Endothelial cell of umbilical vein (primary cell): ENCODE measurements at regions of chr18 and their contacts with region 1.

Region 1: DNA sequence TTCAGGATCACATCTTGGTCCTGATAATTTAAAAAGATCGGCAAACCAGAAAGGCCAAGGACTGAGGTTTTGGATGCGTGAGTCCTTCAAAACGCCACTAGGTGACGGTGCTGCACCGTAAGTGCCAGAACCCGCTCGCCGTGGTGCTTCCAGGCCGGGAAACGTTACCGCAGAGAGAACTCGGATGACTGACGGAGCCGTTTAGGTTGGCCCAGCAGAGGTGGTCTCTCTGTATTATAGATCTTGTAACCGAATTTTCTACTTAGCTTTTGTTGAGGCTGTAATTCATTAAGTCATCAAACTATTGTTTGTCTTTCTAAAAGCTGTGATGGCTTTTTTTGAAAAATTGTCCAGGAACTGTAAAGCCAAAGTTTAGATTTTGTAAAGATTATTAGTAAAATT is 39.8 kb upstream of the ADCYAP1 start:
- DNase-seq: peak; percentile 60
- H3K4me3 ChIP-seq: no peak overlapping the region
- H3K27ac ChIP-seq: no peak overlapping the region
- H3K4me1 ChIP-seq: no peaks in the 10 kb centered on the region
- H3K27me3 ChIP-seq: peaks cover 9 to 21% of the 10 kb centered on the region in 2 experiments
- CTCF ChIP-seq: peak; percentile 98 to 99
- POLR2A ChIP-seq: no peak

Region 2: GRCh38 chr18:892316-892715 is 27.4 kb after region 1 on chr18:
- CTCF ChIA-PET with region 1: no interaction called
- POLR2A ChIA-PET with region 1: no interaction called
- dilution Hi-C with region 1: no loop called
- intact Hi-C with region 1: no loop called
- DNase-seq: no peak
- H3K4me3 ChIP-seq: no peak overlapping the region
- H3K27ac ChIP-seq: no peak overlapping the region
- H3K4me1 ChIP-seq: no peaks in the 10 kb centered on the region
- H3K27me3 ChIP-seq: peaks cover 2 to 6% of the 10 kb centered on the region in 2 experiments
- CTCF ChIP-seq: no peak
- POLR2A ChIP-seq: no peak

Region 3: GRCh38 chr18:961644-962355 is 96.9 kb after region 1 on chr18:
- CTCF ChIA-PET with region 1: interaction called, 17 read pairs
- POLR2A ChIA-PET with region 1: no interaction called
- dilution Hi-C with region 1: no loop called
- intact Hi-C with region 1: loop called (anchors 1 kb)
- DNase-seq: peak; percentile 77
- H3K4me3 ChIP-seq: peak overlapping the region in 2 of 3 experiments; percentile 38 to 52
- H3K27ac ChIP-seq: no peak overlapping the region
- H3K4me1 ChIP-seq: no peaks in the 10 kb centered on the region
- H3K27me3 ChIP-seq: peaks cover 3 to 10% of the 10 kb centered on the region in 2 experiments
- CTCF ChIP-seq: peak; percentile 81 to 93
- POLR2A ChIP-seq: no peak

Region 4: DNA sequence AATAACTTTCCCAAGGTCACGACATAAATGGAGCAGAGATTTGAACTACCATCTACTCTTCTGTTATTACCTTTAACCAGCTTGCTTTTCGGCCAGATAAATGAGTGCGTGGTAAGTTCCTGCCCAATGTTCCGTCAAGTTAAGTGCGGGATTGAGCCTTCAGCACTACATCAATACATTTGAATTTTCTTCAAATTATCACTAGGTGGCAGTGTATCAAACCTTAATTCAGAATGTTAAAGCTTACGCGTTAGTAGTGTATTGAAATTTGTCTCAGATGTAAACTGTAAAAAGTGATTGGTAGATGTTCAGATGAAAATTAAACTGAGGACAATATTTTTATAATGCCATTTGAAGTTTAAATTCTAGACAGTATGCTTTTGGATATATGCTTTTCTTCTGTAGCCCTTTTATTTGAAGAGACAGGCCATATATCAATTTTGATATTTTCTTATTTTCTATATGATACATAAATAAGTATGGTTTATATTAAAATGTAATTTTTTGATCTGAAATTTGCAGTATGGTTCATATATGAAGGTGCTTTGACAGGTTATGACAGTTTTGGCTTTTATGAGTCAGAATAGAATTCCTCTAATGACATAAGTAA is 721.1 kb after region 1 on chr18:
- CTCF ChIA-PET with region 1: interaction called, 3 read pairs
- POLR2A ChIA-PET with region 1: no interaction called
- dilution Hi-C with region 1: no loop called
- intact Hi-C with region 1: loop called (anchors 1 kb)
- DNase-seq: peak; percentile 42
- H3K4me3 ChIP-seq: no peak overlapping the region
- H3K27ac ChIP-seq: no peak overlapping the region
- H3K4me1 ChIP-seq: no peaks in the 10 kb centered on the region
- H3K27me3 ChIP-seq: no peaks in the 10 kb centered on the region
- CTCF ChIP-seq: peak in 1 of 2 donors; percentile 23
- POLR2A ChIP-seq: no peak

Region 5: DNA sequence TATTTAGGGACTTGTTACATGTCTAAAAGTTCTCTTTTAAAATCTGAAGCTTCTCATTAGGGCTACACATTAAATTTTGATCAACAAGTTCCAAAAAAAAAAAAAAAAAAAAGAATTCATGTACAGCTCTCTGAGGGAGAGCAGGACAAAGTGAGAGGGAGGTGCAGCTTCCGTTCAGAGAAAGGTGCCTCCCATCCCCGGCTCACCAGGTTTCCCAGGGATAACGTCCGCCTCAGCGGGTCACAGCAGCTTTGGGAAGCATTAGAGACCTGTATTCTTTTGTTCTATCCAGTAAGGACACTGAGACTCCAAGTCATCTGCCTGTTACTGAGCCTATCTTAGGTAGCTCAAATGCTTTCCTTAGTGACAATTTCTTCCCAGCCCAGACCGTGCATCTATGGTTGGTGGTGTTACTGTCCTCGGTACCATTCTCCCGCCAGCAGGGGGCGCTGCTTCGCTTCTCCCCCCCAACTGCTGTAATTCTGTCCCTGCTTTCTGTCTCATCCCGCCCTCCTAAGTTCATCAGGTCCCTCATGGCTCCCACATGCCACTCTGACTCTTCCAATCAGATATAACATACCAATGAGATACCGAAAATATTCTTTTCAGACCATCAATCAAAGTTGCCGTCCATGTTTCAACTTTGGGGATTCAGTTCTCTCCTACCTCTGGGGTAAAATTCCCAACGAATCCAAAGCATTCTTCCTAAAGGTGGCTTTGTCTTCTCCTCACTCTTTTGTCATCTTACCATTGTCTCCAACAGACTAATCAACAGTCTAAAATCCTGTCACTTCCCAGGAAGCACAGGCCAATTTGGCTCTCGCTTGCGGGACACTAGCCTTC is 1240.0 kb after region 1 on chr18:
- CTCF ChIA-PET with region 1: interaction called, 7 read pairs
- POLR2A ChIA-PET with region 1: no interaction called
- dilution Hi-C with region 1: no loop called
- intact Hi-C with region 1: loop called (anchors 2 kb)
- DNase-seq: peak; percentile 58
- H3K4me3 ChIP-seq: no peak overlapping the region
- H3K27ac ChIP-seq: no peak overlapping the region
- H3K4me1 ChIP-seq: no peaks in the 10 kb centered on the region
- H3K27me3 ChIP-seq: peaks cover 0 to 2% of the 10 kb centered on the region in 2 experiments
- CTCF ChIP-seq: peak; percentile 75 to 87
- POLR2A ChIP-seq: no peak

Region 6: GRCh38 chr18:2337552-2338141 is 1472.8 kb after region 1 on chr18:
- CTCF ChIA-PET with region 1: no interaction called
- POLR2A ChIA-PET with region 1: no interaction called
- dilution Hi-C with region 1: no loop called
- intact Hi-C with region 1: loop called (anchors 2 kb)
- DNase-seq: peak; percentile 27
- H3K4me3 ChIP-seq: no peak overlapping the region
- H3K27ac ChIP-seq: no peak overlapping the region
- H3K4me1 ChIP-seq: no peaks in the 10 kb centered on the region
- H3K27me3 ChIP-seq: peaks cover 2 to 4% of the 10 kb centered on the region in 2 experiments
- CTCF ChIP-seq: peak; percentile 46 to 57
- POLR2A ChIP-seq: no peak